ENCODE measurements at regions of chr1 and their contacts with region 1.

Region 1: GRCh38 chr1:40385437-40386358 is 12.2 kb downstream of the SMAP2 start:
- DNase-seq: peak; percentile 77
- ATAC-seq: peak; percentile 63
- H3K4me3 Mint-ChIP-seq: peak overlapping the region; percentile 74
- H3K27ac Mint-ChIP-seq: peak overlapping the region; percentile 100
- H3K4me1 Mint-ChIP-seq: peaks cover 94% of the 10 kb centered on the region
- H3K27me3 Mint-ChIP-seq: no peaks in the 10 kb centered on the region

Region 2: DNA sequence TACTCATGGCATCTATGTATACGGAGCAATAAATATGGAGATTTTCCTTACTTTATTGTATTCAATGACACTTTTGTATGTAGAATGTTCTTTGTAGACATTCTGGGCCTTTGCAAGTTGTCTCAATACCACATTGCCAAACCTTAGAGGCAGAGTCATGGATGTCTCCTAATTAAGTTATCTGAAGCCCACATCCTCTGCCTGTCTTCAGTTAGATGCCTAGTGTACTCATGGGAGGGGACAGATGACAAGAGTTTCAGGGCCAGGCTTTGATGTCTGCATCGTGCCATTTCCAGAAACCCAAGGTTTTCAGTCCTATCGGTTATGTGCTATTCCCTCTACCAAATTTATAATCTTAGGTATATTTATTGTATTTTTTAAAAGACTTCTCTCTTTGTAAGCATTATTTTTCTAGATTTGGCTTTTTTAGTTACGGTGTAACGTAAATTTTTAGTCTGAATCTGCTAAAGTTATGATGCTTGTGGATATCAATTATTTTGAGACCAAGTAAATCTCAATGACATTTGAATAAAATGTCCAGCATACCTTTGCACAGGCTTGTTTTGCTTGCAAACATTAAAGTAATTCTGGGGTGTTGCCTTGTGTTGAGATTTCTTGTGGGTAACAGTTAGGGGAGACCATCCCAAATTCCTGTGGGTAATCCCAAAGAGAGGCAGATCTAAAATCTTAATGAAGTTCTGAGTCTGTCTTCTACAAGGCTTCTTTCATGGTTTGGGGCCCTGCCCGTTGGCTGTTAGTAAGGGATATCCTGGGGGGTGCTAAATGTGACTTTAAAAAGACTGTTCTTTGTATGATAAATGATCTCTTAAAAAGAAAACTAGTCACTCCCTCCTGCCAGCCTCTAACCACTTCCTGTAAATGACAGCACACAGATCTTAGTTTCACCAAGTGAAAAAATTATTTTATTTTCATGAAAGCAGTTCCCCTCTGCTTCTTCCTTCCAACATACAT is 1189.2 kb before region 1 on chr1:
- CTCF ChIA-PET with region 1: no interaction called
- POLR2A ChIA-PET with region 1: no interaction called
- intact Hi-C with region 1: loop called in 1 of 2 experiments (anchors 10 kb)
- DNase-seq: peak; percentile 78
- ATAC-seq: peak; percentile 42
- H3K4me3 Mint-ChIP-seq: peak overlapping the region; percentile 54
- H3K27ac Mint-ChIP-seq: peak overlapping the region; percentile 87
- H3K4me1 Mint-ChIP-seq: peaks cover 84% of the 10 kb centered on the region
- H3K27me3 Mint-ChIP-seq: no peaks in the 10 kb centered on the region

Region 3: DNA sequence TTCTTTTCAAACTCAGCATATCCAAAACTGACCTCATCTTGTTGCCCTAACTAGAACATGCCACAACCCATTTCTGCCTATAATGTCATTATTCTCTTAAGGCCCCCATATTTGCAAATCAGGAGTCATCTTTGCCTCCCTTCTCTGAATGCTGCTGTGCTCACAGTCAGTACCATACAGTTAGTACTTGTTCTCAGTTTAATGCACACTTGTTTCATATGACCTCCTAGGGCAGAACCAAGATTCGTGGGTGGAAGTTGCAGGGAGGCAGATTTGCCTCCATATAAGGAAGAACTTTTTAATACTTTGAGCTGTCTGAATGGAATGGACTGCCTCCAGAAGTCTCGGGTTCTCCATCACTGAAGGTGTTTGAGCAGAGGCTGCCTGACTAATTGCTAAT is 336.0 kb before region 1 on chr1:
- CTCF ChIA-PET with region 1: no interaction called
- POLR2A ChIA-PET with region 1: no interaction called
- intact Hi-C with region 1: loop called (anchors 5 kb)
- DNase-seq: peak; percentile 48
- ATAC-seq: peak; percentile 77
- H3K4me3 Mint-ChIP-seq: peak overlapping the region; percentile 57
- H3K27ac Mint-ChIP-seq: peak overlapping the region; percentile 95
- H3K4me1 Mint-ChIP-seq: peaks cover 84% of the 10 kb centered on the region
- H3K27me3 Mint-ChIP-seq: no peaks in the 10 kb centered on the region

Region 4: GRCh38 chr1:40257688-40258444 is 127.8 kb before region 1 on chr1 and contains the start of gene ZMPSTE24:
- CTCF ChIA-PET with region 1: no interaction called
- POLR2A ChIA-PET with region 1: no interaction called
- intact Hi-C with region 1: loop called (anchors 1 to 5 kb)
- DNase-seq: peak; percentile 98
- ATAC-seq: peak; percentile 97
- H3K4me3 Mint-ChIP-seq: peak within 1 kb of the TSS; percentile 99
- H3K27ac Mint-ChIP-seq: peak within 1 kb of the TSS; percentile 100
- H3K4me1 Mint-ChIP-seq: peaks cover 47% of the 10 kb centered on the region
- H3K27me3 Mint-ChIP-seq: no peaks in the 10 kb centered on the region
- total RNA-seq, gene ZMPSTE24: 20.7 to 23.0 TPM

Region 5: DNA sequence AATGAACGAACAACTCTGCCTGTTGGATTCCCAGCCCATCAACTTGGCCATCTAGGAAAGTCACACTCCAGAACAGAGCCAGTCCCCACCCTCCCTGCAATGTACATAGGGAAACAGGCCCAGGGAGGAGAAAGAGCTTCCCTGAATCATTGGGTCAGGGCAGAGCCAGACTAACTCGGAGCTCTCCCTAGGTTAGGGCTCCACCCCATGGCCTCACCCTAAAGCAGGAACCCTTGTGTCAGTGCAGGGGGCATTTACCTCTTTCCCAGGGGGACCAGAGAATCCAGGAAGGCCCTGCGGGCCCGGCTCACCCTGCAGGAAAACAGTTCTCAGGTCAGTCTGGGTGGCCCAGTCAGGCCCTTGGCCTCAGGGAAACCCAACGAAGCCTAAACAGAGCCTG is 80.2 kb before region 1 on chr1:
- CTCF ChIA-PET with region 1: no interaction called
- POLR2A ChIA-PET with region 1: no interaction called
- intact Hi-C with region 1: no loop called
- DNase-seq: peak; percentile 42
- ATAC-seq: peak; percentile 63
- H3K4me3 Mint-ChIP-seq: no peak overlapping the region
- H3K27ac Mint-ChIP-seq: no peak overlapping the region
- H3K4me1 Mint-ChIP-seq: no peaks in the 10 kb centered on the region
- H3K27me3 Mint-ChIP-seq: no peaks in the 10 kb centered on the region

Region 6: GRCh38 chr1:40373338-40374283 is 12.1 kb before region 1 on chr1 and contains the start of gene SMAP2:
- CTCF ChIA-PET with region 1: interaction called, 19 read pairs
- POLR2A ChIA-PET with region 1: interaction called, 88 read pairs
- intact Hi-C with region 1: loop called (anchors 1 kb)
- DNase-seq: peak; percentile 98
- ATAC-seq: peak; percentile 85
- H3K4me3 Mint-ChIP-seq: peak within 1 kb of the TSS; percentile 100
- H3K27ac Mint-ChIP-seq: peak within 1 kb of the TSS; percentile 99
- H3K4me1 Mint-ChIP-seq: peaks cover 44% of the 10 kb centered on the region
- H3K27me3 Mint-ChIP-seq: no peaks in the 10 kb centered on the region
- total RNA-seq, gene SMAP2: 241 to 258 TPM

Region 7: GRCh38 chr1:40691538-40692428 is 306.1 kb after region 1 on chr1 and contains the start of gene NFYC:
- CTCF ChIA-PET with region 1: no interaction called
- POLR2A ChIA-PET with region 1: no interaction called
- intact Hi-C with region 1: loop called (anchors 1 to 5 kb)
- DNase-seq: peak; percentile 98
- ATAC-seq: peak; percentile 87
- H3K4me3 Mint-ChIP-seq: peak within 1 kb of the TSS; percentile 100
- H3K27ac Mint-ChIP-seq: peak within 1 kb of the TSS; percentile 97
- H3K4me1 Mint-ChIP-seq: peaks cover 56% of the 10 kb centered on the region
- H3K27me3 Mint-ChIP-seq: no peaks in the 10 kb centered on the region
- total RNA-seq, gene NFYC: 53.6 to 85.4 TPM

Region 8: GRCh38 chr1:40939320-40940059 is 553.8 kb after region 1 on chr1:
- CTCF ChIA-PET with region 1: no interaction called
- POLR2A ChIA-PET with region 1: no interaction called
- intact Hi-C with region 1: no loop called
- DNase-seq: no peak
- ATAC-seq: no peak
- H3K4me3 Mint-ChIP-seq: no peak overlapping the region
- H3K27ac Mint-ChIP-seq: no peak overlapping the region
- H3K4me1 Mint-ChIP-seq: no peaks in the 10 kb centered on the region
- H3K27me3 Mint-ChIP-seq: no peaks in the 10 kb centered on the region